A673 (cell line): ENCODE measurements at regions of chr5 and their contacts with region 1.

Region 1: GRCh38 chr5:567664-568060 is 43.4 kb upstream of the SLC9A3 start:
- DNase-seq: no peak
- H3K4me3 ChIP-seq: no peak overlapping the region
- H3K27ac ChIP-seq: no peak overlapping the region
- H3K4me1 ChIP-seq: no peaks in the 10 kb centered on the region
- H3K27me3 ChIP-seq: peaks cover 43% of the 10 kb centered on the region
- CTCF ChIP-seq: no peak

Region 2: DNA sequence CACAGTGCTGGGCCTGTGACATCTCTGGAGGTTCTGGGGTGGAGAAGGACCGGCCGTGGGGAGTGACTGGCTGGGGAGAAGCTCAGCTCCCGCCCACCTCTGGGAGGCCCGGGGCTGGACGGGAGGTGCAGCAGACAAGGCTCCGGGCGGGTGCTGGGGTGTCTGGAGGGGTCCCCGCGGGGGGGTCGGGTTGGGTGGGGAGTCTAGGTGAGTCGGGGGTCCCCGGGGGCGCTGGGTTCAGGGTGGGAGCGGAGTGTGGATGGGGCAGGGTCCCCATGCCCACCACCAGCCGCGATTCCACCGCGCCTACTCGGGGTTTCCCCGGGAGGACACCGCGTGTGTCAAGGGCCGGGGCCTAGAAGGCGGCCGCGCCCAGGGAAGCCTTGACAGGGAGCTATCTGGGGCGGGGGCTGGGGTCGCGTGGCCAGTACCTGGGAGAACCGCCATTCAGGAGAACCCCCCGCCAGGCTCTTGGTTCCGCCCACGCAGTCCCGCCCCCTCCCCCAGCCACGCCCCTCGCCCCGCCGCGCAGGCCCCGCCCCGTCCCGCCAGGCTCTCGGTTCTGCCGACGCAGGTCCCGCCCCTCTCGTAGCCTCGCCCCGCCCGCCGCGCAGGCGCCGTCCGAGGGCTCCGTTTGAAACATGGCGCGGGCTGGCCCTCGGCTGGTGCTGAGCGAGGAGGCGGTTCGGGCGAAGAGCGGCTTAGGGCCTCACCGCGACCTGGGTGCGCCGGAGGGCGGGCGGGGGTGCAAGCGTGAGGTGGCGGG is 44.2 kb after region 1 on chr5 and contains the start of gene CEP72:
- CTCF ChIA-PET with region 1: no interaction called
- POLR2A ChIA-PET with region 1: interaction called, 12 read pairs
- intact Hi-C with region 1: no loop called
- DNase-seq: peak; percentile 92
- H3K4me3 ChIP-seq: peak within 1 kb of the TSS; percentile 83
- H3K27ac ChIP-seq: peak within 1 kb of the TSS; percentile 67
- H3K4me1 ChIP-seq: peaks cover 3% of the 10 kb centered on the region
- H3K27me3 ChIP-seq: no peaks in the 10 kb centered on the region
- CTCF ChIP-seq: no peak
- total RNA-seq, gene CEP72: 37.2 and 40.1 TPM in 2 replicates